B cell (primary cell): ENCODE measurements at regions of chr14 and their contacts with region 1.

Region 1: GRCh38 chr14:24086193-24086955 is 7.7 kb upstream of the PCK2 start:
- DNase-seq: no peak
- ATAC-seq: no peak
- H3K4me3 ChIP-seq: no peak overlapping the region
- H3K4me3 Mint-ChIP-seq: no peak overlapping the region
- H3K27ac ChIP-seq: no peak overlapping the region
- H3K27ac Mint-ChIP-seq: no peak overlapping the region
- H3K4me1 ChIP-seq: peaks cover 5 to 16% of the 10 kb centered on the region in 2 donors
- H3K4me1 Mint-ChIP-seq: peaks cover 17% of the 10 kb centered on the region
- H3K27me3 ChIP-seq: no peaks in the 10 kb centered on the region
- H3K27me3 Mint-ChIP-seq: no peaks in the 10 kb centered on the region
- CTCF ChIP-seq: no peak

Region 2: GRCh38 chr14:24051789-24052655 is 34.4 kb before region 1 on chr14 and contains the start of gene CARMIL3:
- CTCF ChIA-PET with region 1: interaction called, 198 read pairs
- POLR2A ChIA-PET with region 1: interaction called, 9 read pairs
- intact Hi-C with region 1: loop called (anchors 1 kb)
- DNase-seq: peak; percentile 79
- ATAC-seq: peak; percentile 87
- H3K4me3 ChIP-seq: peak within 1 kb of the TSS; percentile 22 to 81 (median 63)
- H3K4me3 Mint-ChIP-seq: peak within 1 kb of the TSS; percentile 83
- H3K27ac ChIP-seq: peak within 1 kb of the TSS; percentile 34 to 57
- H3K27ac Mint-ChIP-seq: peak within 1 kb of the TSS; percentile 68
- H3K4me1 ChIP-seq: peaks cover 19 to 29% of the 10 kb centered on the region in 2 donors
- H3K4me1 Mint-ChIP-seq: peaks cover 41% of the 10 kb centered on the region
- H3K27me3 ChIP-seq: peaks cover 0 to 31% (median 8%) of the 10 kb centered on the region in 4 experiments
- H3K27me3 Mint-ChIP-seq: peaks cover 7% of the 10 kb centered on the region
- CTCF ChIP-seq: no peak
- total RNA-seq, gene CARMIL3: 1.0 and 1.4 TPM in 2 replicates

Region 3: DNA sequence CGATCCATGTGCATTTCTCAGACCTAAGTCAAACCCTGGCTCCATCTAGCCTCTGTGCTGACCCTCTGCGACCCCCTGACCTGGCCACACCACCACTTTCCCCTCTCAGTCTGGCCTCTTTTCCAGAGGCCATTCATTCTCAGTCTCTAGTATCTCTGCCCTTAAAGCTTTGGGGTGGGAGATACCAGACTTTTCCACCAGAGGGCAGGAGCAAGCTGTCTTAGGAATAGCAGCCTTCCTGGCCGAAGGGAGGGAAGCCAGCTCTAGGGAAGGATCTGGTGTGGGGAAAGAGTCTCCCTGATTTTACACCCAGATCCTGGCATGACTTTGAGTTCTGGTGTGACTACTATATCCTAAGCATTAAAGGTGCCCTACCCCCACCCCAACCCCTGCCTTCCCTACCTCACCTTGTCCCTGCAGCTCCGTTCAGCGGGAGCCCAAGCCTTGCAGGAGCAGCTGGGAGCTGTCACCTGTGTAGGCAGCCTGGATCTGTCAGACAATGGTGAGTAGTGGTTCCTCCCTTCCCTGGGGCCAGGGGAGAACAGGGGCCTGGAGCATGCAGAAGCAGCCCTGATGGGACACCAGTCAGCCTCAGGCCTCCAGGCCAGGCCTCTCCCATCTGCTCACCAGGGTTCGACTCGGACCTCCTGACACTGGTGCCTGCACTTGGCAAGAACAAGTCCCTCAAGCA is 28.0 kb before region 1 on chr14:
- CTCF ChIA-PET with region 1: interaction called, 198 read pairs
- POLR2A ChIA-PET with region 1: interaction called, 3 read pairs
- intact Hi-C with region 1: loop called (anchors 1 kb)
- DNase-seq: no peak
- ATAC-seq: peak; percentile 68
- H3K4me3 ChIP-seq: no peak overlapping the region
- H3K4me3 Mint-ChIP-seq: no peak overlapping the region
- H3K27ac ChIP-seq: no peak overlapping the region
- H3K27ac Mint-ChIP-seq: no peak overlapping the region
- H3K4me1 ChIP-seq: no peaks in the 10 kb centered on the region
- H3K4me1 Mint-ChIP-seq: peaks cover 1% of the 10 kb centered on the region
- H3K27me3 ChIP-seq: peaks cover 0 to 26% (median 5%) of the 10 kb centered on the region in 4 experiments
- H3K27me3 Mint-ChIP-seq: no peaks in the 10 kb centered on the region
- CTCF ChIP-seq: peak; percentile 75

Region 4: DNA sequence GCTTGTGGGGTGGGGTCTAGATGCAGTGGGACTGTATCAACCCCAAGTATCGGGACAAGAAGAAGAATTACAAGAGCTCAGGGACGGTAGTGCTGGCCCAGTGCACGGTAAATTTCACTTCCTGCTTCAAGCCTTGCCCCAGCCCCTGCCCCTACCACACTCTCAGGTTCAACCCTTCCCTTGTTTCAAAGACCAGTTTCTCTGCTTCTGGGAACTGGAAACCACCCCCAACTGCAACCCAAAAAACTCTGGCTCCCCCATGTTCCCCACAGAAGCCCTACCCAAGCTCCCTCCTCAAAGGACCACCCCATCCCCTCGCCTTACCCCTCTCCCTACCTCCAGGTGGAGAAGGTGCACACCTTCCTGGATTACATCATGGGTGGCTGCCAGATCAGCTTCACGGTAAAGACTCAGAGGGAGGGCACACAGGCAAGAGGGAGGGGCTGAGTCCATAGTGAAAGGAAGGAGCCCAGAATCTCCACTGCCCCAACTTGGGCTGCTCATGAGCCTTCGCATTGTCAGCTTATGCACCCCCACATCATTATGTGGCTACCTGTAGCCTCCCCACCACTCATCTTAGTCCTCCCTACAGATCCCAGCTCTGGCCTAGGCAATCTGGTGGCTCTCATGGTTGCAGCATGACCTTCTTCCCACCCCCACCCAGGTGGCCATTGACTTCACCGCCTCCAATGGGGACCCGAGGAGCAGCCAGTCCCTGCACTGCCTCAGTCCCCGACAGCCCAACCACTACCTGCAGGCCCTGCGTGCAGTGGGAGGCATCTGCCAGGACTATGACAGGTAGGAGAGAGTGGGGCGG is 10.7 kb before region 1 on chr14:
- CTCF ChIA-PET with region 1: interaction called, 96 read pairs
- POLR2A ChIA-PET with region 1: interaction called, 9 read pairs
- intact Hi-C with region 1: no loop called
- DNase-seq: peak; percentile 51
- ATAC-seq: peak; percentile 68
- H3K4me3 ChIP-seq: peak overlapping the region in 1 of 5 experiments; percentile 22
- H3K4me3 Mint-ChIP-seq: peak overlapping the region; percentile 38
- H3K27ac ChIP-seq: peak overlapping the region in 1 of 2 donors; percentile 25
- H3K27ac Mint-ChIP-seq: peak overlapping the region; percentile 81
- H3K4me1 ChIP-seq: peaks cover 24 to 29% of the 10 kb centered on the region in 2 donors
- H3K4me1 Mint-ChIP-seq: peaks cover 33% of the 10 kb centered on the region
- H3K27me3 ChIP-seq: peaks cover 0 to 4% (median 0%) of the 10 kb centered on the region in 4 experiments
- H3K27me3 Mint-ChIP-seq: peaks cover 4% of the 10 kb centered on the region
- CTCF ChIP-seq: no peak